ENCODE measurements at regions of chr17 and their contacts with region 1.

Region 1: GRCh38 chr17:12342609-12343435 is 322.1 kb downstream of the MAP2K4 start:
- DNase-seq: no peak
- ATAC-seq: no peak

Region 2: GRCh38 chr17:12180644-12181261 is 162.1 kb before region 1 on chr17:
- intact Hi-C with region 1: no loop called
- DNase-seq: no peak
- ATAC-seq: no peak

Region 3: DNA sequence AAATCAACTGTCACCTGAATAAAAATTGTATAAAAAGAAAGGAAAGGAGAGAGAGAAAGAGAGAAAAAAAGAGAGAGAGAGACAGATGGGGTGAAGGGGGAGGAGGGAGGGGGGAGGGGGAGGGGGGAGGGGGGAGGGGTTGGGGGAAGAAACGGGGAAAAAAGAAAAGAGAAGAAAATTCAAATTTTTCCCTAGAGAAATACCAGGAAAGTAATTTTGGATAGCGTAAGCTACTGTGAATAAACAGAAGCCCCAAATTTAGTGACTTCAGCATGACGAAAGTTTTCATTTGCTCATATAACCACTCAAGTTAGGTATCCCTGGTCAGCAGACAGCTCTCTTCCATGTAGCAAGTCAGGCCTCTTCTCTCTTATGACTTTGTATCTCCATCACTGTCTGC is 33.5 kb after region 1 on chr17:
- intact Hi-C with region 1: loop called (anchors 5 kb)
- DNase-seq: no peak
- ATAC-seq: no peak

Region 4: DNA sequence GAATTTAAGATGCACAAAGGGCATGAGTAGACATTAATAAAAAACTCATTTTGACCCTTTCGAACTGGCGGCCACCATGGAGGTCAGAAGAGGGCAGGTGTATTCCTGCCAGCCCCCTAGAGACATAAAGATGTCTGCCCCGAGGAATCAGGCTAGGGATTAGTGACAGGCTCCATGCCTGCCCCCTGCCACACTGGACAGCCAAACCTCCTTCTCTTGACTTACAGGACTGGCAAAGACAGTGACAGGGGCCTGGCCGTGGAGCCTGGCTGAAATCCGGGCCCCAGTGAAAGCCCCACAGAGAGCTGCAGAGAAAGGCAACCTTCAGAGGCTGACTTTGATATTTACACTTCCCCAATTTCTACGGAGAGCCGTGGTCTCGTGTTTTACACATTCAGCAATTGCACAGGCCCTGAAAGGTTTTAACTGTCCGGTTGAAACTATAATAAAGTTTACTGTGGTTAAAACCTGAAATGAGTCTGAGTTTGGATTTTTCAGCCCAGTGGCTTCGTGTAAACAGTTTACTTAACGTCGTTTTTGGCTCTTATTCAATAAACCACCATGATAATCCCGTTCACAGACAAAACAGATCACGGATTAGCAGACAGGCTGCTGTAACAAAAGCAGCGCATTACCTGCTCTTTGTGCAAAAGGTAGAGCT is 79.0 kb after region 1 on chr17:
- intact Hi-C with region 1: loop called (anchors 10 kb)
- DNase-seq: no peak
- ATAC-seq: no peak

Measured in Right ventricle myocardium inferior (tissue), 1 donor.